ENCODE measurements at regions of chr4 and their contacts with region 1.

Region 1: DNA sequence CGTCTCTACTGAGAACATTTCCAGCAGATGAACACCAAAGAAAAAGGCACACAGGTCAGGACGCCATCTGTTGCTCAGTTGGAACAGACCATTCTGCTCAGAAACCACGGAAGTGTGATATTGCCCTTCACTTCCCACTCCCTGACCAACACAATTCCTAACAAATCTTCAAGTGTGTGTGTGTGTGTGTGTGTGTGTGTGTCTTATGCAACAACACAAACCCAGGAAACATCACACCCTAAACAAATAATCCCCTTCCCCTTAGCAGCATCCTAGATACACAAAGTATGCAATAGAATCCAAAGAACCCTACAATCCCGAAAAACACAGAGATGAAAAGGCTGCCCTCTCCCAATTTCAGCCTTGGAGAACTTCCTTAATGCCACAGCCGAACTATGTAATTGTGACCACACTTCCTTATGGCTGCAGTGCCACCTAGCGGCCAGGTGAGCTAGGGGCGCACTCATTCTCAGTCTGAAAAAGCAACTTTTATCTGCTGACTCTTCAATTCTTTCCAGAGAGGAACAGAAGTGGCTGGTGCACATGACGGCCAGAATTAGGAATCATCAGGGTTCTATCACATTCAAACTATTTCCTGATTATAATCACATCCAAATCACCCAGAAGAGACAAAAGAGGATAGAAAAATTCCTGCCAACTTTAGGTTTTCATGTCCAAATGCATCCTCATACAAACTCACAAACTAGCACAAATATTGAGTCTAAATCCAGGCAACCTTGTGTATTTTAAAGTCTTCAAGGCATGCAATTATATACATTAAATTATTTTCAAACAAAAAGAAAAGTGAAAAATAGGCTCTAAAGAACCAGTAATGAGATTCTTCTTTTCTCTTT is 164.9 kb downstream of the DHX15 start:
- DNase-seq: peak; percentile 10 to 68 (median 36)
- ATAC-seq: peak; percentile 64
- H3K4me3 ChIP-seq: no peak overlapping the region
- H3K4me3 Mint-ChIP-seq: peak overlapping the region in 3 of 10 donors; percentile 10 to 54 (median 28)
- H3K27ac ChIP-seq: no peak overlapping the region
- H3K27ac Mint-ChIP-seq: no peak overlapping the region
- H3K4me1 ChIP-seq: no peaks in the 10 kb centered on the region
- H3K4me1 Mint-ChIP-seq: peaks cover 0 to 5% (median 5%) of the 10 kb centered on the region in 7 donors
- H3K27me3 ChIP-seq: no peaks in the 10 kb centered on the region
- H3K27me3 Mint-ChIP-seq: peaks cover 2 to 21% (median 12%) of the 10 kb centered on the region in 5 donors

Region 2: DNA sequence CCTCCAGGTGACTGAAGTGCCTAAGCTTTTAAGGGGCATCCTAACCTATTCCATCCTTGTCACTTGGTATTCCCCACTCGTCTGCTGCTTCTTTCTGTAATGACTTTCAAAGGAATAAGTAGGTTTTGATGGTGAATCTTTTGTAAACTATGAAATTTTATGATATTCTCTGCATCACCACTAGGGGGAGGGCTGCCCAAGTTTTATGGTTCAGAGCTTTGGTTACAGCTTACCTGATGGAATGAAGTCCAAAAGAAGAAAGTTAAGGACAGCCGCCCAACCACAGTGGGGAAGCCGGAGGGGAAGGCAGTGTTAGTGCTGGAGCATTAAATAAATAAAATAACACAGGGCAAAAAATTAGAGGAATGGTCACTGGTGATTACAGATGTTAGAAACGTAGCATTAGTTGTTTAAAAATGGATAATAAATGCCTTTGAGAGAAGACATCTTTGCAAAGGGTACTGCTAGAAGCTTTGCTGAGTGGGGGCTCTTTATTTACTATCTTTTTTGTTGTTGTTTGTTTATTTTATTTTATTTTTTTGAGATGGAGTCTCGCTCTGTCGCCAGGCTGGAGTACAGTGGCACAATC is 1521.8 kb before region 1 on chr4:
- CTCF ChIA-PET with region 1: interaction called, 5 read pairs
- POLR2A ChIA-PET with region 1: no interaction called
- intact Hi-C with region 1: loop called in 1 of 2 experiments (anchors 1 kb)
- DNase-seq: peak in 5 of 9 donors; percentile 5 to 21 (median 19)
- ATAC-seq: no peak
- H3K4me3 ChIP-seq: no peak overlapping the region
- H3K4me3 Mint-ChIP-seq: no peak overlapping the region
- H3K27ac ChIP-seq: no peak overlapping the region
- H3K27ac Mint-ChIP-seq: no peak overlapping the region
- H3K4me1 ChIP-seq: no peaks in the 10 kb centered on the region
- H3K4me1 Mint-ChIP-seq: no peaks in the 10 kb centered on the region
- H3K27me3 ChIP-seq: no peaks in the 10 kb centered on the region
- H3K27me3 Mint-ChIP-seq: peaks cover 0 to 25% (median 10%) of the 10 kb centered on the region in 5 donors

Region 3: GRCh38 chr4:22962295-22962694 is 1457.1 kb before region 1 on chr4:
- CTCF ChIA-PET with region 1: no interaction called
- POLR2A ChIA-PET with region 1: no interaction called
- intact Hi-C with region 1: loop called in 1 of 2 experiments (anchors 2 kb)
- DNase-seq: no peak
- ATAC-seq: no peak
- H3K4me3 ChIP-seq: no peak overlapping the region
- H3K4me3 Mint-ChIP-seq: no peak overlapping the region
- H3K27ac ChIP-seq: no peak overlapping the region
- H3K27ac Mint-ChIP-seq: no peak overlapping the region
- H3K4me1 ChIP-seq: no peaks in the 10 kb centered on the region
- H3K4me1 Mint-ChIP-seq: no peaks in the 10 kb centered on the region
- H3K27me3 ChIP-seq: no peaks in the 10 kb centered on the region
- H3K27me3 Mint-ChIP-seq: peaks cover 0 to 6% (median 0%) of the 10 kb centered on the region in 5 donors

Region 4: GRCh38 chr4:23135792-23136645 is 1283.4 kb before region 1 on chr4:
- CTCF ChIA-PET with region 1: interaction called, 6 read pairs
- POLR2A ChIA-PET with region 1: no interaction called
- intact Hi-C with region 1: loop called in 1 of 2 experiments (anchors 1 kb)
- DNase-seq: peak in 5 of 9 donors; percentile 2 to 20 (median 18)
- ATAC-seq: no peak
- H3K4me3 ChIP-seq: no peak overlapping the region
- H3K4me3 Mint-ChIP-seq: no peak overlapping the region
- H3K27ac ChIP-seq: no peak overlapping the region
- H3K27ac Mint-ChIP-seq: no peak overlapping the region
- H3K4me1 ChIP-seq: no peaks in the 10 kb centered on the region
- H3K4me1 Mint-ChIP-seq: no peaks in the 10 kb centered on the region
- H3K27me3 ChIP-seq: no peaks in the 10 kb centered on the region
- H3K27me3 Mint-ChIP-seq: peaks cover 0 to 9% (median 0%) of the 10 kb centered on the region in 5 donors

Region 5: DNA sequence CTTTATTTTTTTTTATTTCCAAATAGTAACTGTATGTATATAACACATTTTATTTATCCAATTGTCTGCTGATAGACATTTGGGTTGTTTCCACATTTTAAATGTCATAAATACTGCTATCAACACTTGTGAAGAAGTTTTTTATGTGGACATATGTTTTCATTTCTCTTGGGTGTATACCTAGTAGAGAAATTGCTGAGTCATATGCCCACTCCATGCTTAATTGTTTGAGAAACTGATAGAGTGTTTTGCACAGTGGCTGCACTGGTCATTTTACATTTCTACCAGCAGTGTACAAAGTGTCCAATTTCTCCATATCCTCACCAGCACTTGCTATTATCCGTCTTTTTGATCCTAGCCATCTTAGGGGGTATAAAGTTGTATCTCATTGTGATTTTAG is 1158.9 kb before region 1 on chr4:
- CTCF ChIA-PET with region 1: no interaction called
- POLR2A ChIA-PET with region 1: no interaction called
- intact Hi-C with region 1: loop called in 1 of 2 experiments (anchors 2 kb)
- DNase-seq: no peak
- ATAC-seq: no peak
- H3K4me3 ChIP-seq: no peak overlapping the region
- H3K4me3 Mint-ChIP-seq: no peak overlapping the region
- H3K27ac ChIP-seq: no peak overlapping the region
- H3K27ac Mint-ChIP-seq: no peak overlapping the region
- H3K4me1 ChIP-seq: no peaks in the 10 kb centered on the region
- H3K4me1 Mint-ChIP-seq: no peaks in the 10 kb centered on the region
- H3K27me3 ChIP-seq: no peaks in the 10 kb centered on the region
- H3K27me3 Mint-ChIP-seq: peaks cover 0 to 3% (median 0%) of the 10 kb centered on the region in 5 donors

Region 6: GRCh38 chr4:24400537-24400936 is 18.9 kb before region 1 on chr4:
- CTCF ChIA-PET with region 1: no interaction called
- POLR2A ChIA-PET with region 1: no interaction called
- intact Hi-C with region 1: no loop called
- DNase-seq: no peak
- ATAC-seq: no peak
- H3K4me3 ChIP-seq: no peak overlapping the region
- H3K4me3 Mint-ChIP-seq: no peak overlapping the region
- H3K27ac ChIP-seq: no peak overlapping the region
- H3K27ac Mint-ChIP-seq: no peak overlapping the region
- H3K4me1 ChIP-seq: no peaks in the 10 kb centered on the region
- H3K4me1 Mint-ChIP-seq: no peaks in the 10 kb centered on the region
- H3K27me3 ChIP-seq: no peaks in the 10 kb centered on the region
- H3K27me3 Mint-ChIP-seq: peaks cover 0 to 20% (median 3%) of the 10 kb centered on the region in 5 donors

Measured in naive thymus-derived CD4-positive, alpha-beta T cell (primary cell).